CD8-positive, alpha-beta T cell (primary cell): ENCODE measurements at regions of chr1 and their contacts with region 1.

Region 1: DNA sequence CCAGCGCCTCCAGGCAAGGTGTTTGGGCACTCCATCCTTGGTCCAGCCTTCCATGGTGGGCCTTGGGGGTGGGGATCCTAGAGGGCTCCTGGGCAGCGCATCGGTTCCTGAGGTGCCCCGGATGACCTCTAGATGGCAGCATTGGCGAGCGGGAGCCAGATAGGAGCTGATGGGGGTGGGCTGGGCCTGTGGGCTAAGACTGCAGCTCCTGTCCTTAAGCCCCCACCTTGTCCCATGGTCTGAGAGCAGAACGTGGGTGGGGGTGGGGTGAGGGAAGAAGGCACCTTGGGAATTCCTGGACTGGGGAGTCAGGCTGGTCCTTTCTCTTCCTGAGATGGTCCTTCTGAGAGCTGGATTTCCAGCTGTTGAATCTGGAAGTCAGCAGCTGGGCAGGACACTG is 93.4 kb upstream of the CSF3R start:
- DNase-seq: peak; percentile 9 to 64 (median 42)
- ATAC-seq: no peak
- H3K4me3 ChIP-seq: no peak overlapping the region
- H3K4me3 Mint-ChIP-seq: no peak overlapping the region
- H3K27ac ChIP-seq: no peak overlapping the region
- H3K27ac Mint-ChIP-seq: no peak overlapping the region
- H3K4me1 ChIP-seq: no peaks in the 10 kb centered on the region
- H3K4me1 Mint-ChIP-seq: no peaks in the 10 kb centered on the region
- H3K27me3 ChIP-seq: peaks cover 0 to 2% of the 10 kb centered on the region in 2 experiments
- H3K27me3 Mint-ChIP-seq: peaks cover 37% of the 10 kb centered on the region
- CTCF ChIP-seq: peak; percentile 70

Region 2: DNA sequence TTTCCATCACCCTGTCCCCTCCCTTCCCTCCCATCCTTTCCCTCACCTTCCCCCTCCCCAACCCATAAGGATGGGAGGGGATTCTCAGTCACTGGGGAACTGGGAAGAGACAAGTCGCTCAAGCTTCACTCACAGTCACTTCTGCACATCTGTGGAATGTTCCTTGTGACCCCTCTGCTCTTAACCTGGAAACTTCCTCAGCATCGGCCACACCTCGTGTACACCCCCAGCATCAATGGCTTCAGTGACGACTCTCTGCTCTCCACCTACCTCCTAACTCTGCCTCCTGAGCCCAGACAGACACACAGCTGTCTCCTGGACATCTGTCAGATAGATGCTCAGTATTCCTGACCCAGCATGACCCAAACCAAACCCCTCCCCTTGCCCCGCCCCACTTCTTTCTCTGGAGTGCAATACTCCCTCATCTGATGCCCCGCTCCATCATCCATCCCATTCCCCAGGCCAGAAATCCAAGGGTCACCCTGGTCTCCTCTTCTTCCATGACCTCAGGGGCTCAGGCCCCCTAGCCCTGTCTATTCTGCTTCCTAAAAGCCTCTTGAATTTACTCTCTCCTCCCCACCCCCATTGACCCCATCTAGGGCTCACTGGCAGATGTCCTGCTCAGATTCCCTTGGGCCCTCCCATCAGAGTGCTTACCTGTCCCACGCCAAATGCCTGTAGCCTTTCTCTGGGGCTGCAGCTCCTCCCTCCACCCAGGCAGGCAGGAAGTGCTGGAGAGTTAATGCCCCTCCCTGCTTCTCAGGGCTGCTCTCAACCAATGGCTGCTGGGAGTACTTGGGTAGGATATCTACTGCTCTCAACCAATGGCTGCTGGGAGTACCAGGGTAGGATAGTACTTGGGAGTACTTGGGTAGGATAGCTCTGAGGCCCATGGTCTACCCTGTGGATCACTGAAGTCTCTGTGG is 10.3 kb before region 1 on chr1:
- CTCF ChIA-PET with region 1: interaction called, 18 read pairs
- POLR2A ChIA-PET with region 1: no interaction called
- intact Hi-C with region 1: no loop called
- DNase-seq: no peak
- ATAC-seq: no peak
- H3K4me3 ChIP-seq: no peak overlapping the region
- H3K4me3 Mint-ChIP-seq: no peak overlapping the region
- H3K27ac ChIP-seq: no peak overlapping the region
- H3K27ac Mint-ChIP-seq: no peak overlapping the region
- H3K4me1 ChIP-seq: no peaks in the 10 kb centered on the region
- H3K4me1 Mint-ChIP-seq: no peaks in the 10 kb centered on the region
- H3K27me3 ChIP-seq: no peaks in the 10 kb centered on the region
- H3K27me3 Mint-ChIP-seq: peaks cover 7% of the 10 kb centered on the region
- CTCF ChIP-seq: no peak

Region 3: DNA sequence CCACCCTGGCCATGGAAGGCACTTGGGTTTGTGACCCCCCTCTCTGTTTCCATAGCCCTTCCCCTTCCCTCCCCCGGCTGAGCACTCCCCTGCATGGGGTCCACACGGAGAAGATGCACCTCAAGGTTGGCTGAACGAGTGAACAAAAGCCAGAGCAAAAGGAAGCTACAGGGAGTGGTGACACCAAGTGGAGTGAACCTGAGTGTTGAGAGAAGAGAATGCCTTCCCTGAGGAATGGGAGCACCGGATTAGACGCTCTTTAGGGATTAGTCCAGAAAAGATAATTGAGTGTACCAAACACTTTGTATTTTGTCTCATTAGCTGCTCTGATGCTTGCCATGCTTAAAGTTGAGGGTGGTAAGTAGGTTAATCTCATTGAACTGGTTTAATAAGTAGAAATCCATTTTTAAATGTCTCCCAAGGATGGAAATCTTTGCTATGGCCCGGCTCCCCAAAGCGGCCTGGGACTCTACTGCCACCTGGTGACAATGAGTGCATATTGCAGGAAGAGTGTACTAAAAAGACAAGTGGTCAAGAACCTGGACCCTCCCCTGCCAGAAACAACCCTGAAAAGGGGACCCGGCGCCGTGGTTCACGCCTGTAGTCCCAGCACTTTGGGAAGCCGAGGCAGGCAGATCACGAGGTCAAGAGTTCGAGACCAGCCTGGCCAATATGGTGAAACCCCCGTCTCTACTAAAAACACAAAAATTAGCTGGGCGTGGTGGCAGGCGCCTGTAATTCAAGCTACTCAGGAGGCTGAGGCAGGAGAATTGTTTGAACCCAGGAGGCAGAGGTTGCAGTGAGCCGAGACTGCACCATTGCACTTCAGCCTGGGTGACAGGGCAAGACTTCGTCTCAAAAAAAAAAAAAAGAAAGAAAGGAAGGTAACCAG is 747.6 kb after region 1 on chr1:
- CTCF ChIA-PET with region 1: no interaction called
- POLR2A ChIA-PET with region 1: no interaction called
- intact Hi-C with region 1: loop called in 1 of 2 experiments (anchors 5 kb)
- DNase-seq: peak in 2 of 9 experiments; percentile 17 to 24
- ATAC-seq: no peak
- H3K4me3 ChIP-seq: no peak overlapping the region
- H3K4me3 Mint-ChIP-seq: no peak overlapping the region
- H3K27ac ChIP-seq: no peak overlapping the region
- H3K27ac Mint-ChIP-seq: no peak overlapping the region
- H3K4me1 ChIP-seq: no peaks in the 10 kb centered on the region
- H3K4me1 Mint-ChIP-seq: no peaks in the 10 kb centered on the region
- H3K27me3 ChIP-seq: peaks cover 3 to 7% of the 10 kb centered on the region in 2 experiments
- H3K27me3 Mint-ChIP-seq: peaks cover 35% of the 10 kb centered on the region
- CTCF ChIP-seq: peak; percentile 19